Activated B cell treated with CpG ODN at 0.5 μM for 24 hours (primary cell): ENCODE measurements at regions of chr3 and their contacts with region 1.

Region 1: DNA sequence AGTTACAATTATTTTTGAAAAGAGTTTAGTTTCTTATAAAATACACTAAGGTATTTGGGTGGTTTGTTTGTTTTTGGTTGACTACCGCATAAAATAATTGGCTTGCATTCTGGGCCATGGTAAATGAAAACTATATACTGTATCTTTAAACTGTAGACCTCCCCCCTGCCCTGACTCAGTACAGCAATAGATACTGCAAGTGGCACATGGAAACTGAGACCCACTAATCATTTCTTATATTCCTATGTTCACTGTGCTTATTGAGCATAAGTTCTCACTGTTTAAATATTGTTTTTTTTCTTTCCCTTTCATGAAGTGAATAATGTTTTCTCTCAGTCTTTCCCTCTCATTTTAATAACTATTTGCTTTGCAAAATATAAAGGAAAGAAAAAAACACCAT is 45.8 kb downstream of the RASA2 start:
- DNase-seq: no peak
- ATAC-seq: no peak
- H3K4me3 Mint-ChIP-seq: no peak overlapping the region
- H3K27ac Mint-ChIP-seq: no peak overlapping the region
- H3K4me1 Mint-ChIP-seq: peaks cover 43% of the 10 kb centered on the region
- H3K27me3 Mint-ChIP-seq: no peaks in the 10 kb centered on the region
- CTCF ChIP-seq: no peak

Region 2: GRCh38 chr3:141421639-141422330 is 110.8 kb before region 1 on chr3:
- CTCF ChIA-PET with region 1: no interaction called
- POLR2A ChIA-PET with region 1: no interaction called
- intact Hi-C with region 1: no loop called
- DNase-seq: no peak
- ATAC-seq: no peak
- H3K4me3 Mint-ChIP-seq: no peak overlapping the region
- H3K27ac Mint-ChIP-seq: no peak overlapping the region
- H3K4me1 Mint-ChIP-seq: peaks cover 8% of the 10 kb centered on the region
- H3K27me3 Mint-ChIP-seq: no peaks in the 10 kb centered on the region
- CTCF ChIP-seq: no peak

Region 3: GRCh38 chr3:141465221-141465620 is 67.4 kb before region 1 on chr3:
- CTCF ChIA-PET with region 1: no interaction called
- POLR2A ChIA-PET with region 1: no interaction called
- intact Hi-C with region 1: no loop called
- DNase-seq: no peak
- ATAC-seq: no peak
- H3K4me3 Mint-ChIP-seq: no peak overlapping the region
- H3K27ac Mint-ChIP-seq: no peak overlapping the region
- H3K4me1 Mint-ChIP-seq: peaks cover 9% of the 10 kb centered on the region
- H3K27me3 Mint-ChIP-seq: no peaks in the 10 kb centered on the region
- CTCF ChIP-seq: no peak

Region 4: GRCh38 chr3:141553055-141553454 is 20.4 kb after region 1 on chr3:
- CTCF ChIA-PET with region 1: no interaction called
- POLR2A ChIA-PET with region 1: no interaction called
- intact Hi-C with region 1: loop called (anchors 2 kb)
- DNase-seq: no peak
- ATAC-seq: no peak
- H3K4me3 Mint-ChIP-seq: no peak overlapping the region
- H3K27ac Mint-ChIP-seq: peak overlapping the region; percentile 48
- H3K4me1 Mint-ChIP-seq: peaks cover 35% of the 10 kb centered on the region
- H3K27me3 Mint-ChIP-seq: no peaks in the 10 kb centered on the region
- CTCF ChIP-seq: no peak

Region 5: DNA sequence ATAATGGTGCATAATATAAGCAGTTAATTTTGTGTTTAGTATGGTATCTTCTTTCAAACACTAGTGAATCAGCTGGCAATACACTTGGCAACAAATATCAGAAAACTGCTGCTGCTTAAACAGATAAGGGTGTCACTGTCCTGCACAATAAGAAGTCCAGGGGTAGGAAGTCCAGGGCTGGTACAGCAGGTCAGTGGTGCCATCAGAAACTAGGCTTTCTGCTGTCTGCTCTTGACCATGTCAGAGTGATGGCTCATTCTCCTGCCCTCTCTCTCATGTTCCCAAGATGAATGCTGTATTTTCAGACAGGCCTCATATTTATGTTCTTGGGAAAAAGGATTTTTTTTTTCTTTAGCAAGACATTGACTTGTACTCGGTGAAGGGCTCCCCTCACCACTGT is 221.4 kb after region 1 on chr3:
- CTCF ChIA-PET with region 1: no interaction called
- POLR2A ChIA-PET with region 1: no interaction called
- intact Hi-C with region 1: no loop called
- DNase-seq: no peak
- ATAC-seq: no peak
- H3K4me3 Mint-ChIP-seq: no peak overlapping the region
- H3K27ac Mint-ChIP-seq: no peak overlapping the region
- H3K4me1 Mint-ChIP-seq: no peaks in the 10 kb centered on the region
- H3K27me3 Mint-ChIP-seq: no peaks in the 10 kb centered on the region
- CTCF ChIP-seq: no peak